Activated CD8-positive, alpha-beta T cell treated with anti-CD3 and anti-CD28 coated beads for 36 hours (primary cell): ENCODE measurements at regions of chr12 and their contacts with region 1.

Region 1: GRCh38 chr12:27014085-27014858 is at the start of gene TM7SF3:
- DNase-seq: peak; percentile 96
- ATAC-seq: peak; percentile 88
- H3K4me3 Mint-ChIP-seq: peak within 1 kb of the TSS; percentile 91
- H3K27ac Mint-ChIP-seq: peak within 1 kb of the TSS; percentile 92
- H3K4me1 Mint-ChIP-seq: peaks cover 43% of the 10 kb centered on the region
- H3K27me3 Mint-ChIP-seq: no peaks in the 10 kb centered on the region
- CTCF ChIP-seq: peak; percentile 99
- total RNA-seq, gene TM7SF3: 36.7 to 37.6 TPM

Region 2: DNA sequence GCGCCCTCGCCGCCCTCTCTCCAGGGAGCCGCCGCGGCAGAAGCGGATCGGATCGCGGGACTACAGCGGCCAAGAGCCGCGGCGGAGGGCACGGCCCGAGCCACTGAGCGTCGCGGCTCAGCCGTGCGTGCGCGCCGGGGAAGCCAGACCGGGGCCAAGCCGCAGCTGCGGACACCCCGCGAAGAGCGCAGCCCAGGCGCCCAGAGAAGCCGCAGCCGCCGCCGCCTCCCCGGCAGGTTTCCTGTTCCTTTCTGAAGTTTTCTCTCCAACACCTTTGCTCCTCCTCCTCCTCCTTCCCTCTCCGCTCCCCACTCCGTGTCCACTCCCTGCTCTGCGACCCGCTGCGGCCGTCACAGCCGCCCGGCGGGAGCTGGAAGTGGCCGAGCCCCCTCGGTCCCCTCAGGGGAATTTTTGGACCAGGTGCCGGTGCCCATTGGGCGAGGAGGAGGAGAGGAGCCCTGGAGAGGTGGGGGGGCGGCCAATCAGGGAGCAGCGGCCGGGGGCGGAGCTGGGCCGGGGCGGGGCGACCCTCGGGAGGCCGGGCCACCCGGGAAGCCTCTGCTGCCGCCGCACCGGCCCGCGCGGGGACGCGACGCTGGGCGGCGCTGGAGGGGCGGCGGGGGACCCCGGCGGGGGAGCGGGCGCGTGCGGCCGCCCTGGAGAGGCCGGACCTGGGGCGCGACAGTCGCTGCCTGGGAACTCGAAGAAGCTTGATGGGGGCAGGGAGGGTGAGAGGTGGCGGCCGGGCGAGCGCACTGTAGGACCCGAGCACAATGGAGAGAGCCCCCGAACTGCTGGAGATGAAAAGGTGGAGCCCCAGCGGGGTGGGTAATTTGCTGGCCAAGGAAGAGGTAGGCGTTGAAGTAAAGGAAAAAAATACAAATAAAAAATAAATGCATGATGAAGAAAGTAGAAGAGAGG is 181.2 kb before region 1 on chr12 and contains the start of gene ITPR2:
- CTCF ChIA-PET with region 1: interaction called, 10 read pairs
- POLR2A ChIA-PET with region 1: interaction called, 3 read pairs
- intact Hi-C with region 1: no loop called
- DNase-seq: peak; percentile 96
- ATAC-seq: peak; percentile 94
- H3K4me3 Mint-ChIP-seq: peak within 1 kb of the TSS; percentile 95
- H3K27ac Mint-ChIP-seq: peak within 1 kb of the TSS; percentile 98
- H3K4me1 Mint-ChIP-seq: peaks cover 38% of the 10 kb centered on the region
- H3K27me3 Mint-ChIP-seq: no peaks in the 10 kb centered on the region
- CTCF ChIP-seq: peak; percentile 34
- total RNA-seq, gene ITPR2: 38.9 to 41.2 TPM

Region 3: DNA sequence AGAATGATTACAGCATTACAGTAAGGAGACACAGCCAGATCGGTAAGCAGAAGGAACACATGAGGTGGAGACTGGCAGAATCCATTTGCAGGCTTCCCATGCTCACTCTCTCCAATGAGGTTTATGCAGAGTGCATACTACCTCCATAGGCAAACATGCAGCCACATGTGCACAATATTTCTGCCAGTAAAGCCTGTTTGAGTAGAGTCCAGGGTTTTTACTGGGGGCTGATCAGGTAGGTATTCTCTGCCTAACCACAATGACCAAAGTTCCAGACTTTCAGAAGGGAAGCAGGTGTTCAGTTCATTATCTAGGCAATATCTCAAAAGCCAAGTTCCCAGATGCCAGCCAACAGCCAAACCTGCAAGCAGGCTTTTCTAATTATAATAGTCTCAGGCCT is 107.6 kb before region 1 on chr12:
- CTCF ChIA-PET with region 1: no interaction called
- POLR2A ChIA-PET with region 1: no interaction called
- intact Hi-C with region 1: no loop called
- DNase-seq: no peak
- ATAC-seq: no peak
- H3K4me3 Mint-ChIP-seq: no peak overlapping the region
- H3K27ac Mint-ChIP-seq: peak overlapping the region; percentile 22
- H3K4me1 Mint-ChIP-seq: peaks cover 8% of the 10 kb centered on the region
- H3K27me3 Mint-ChIP-seq: no peaks in the 10 kb centered on the region
- CTCF ChIP-seq: no peak

Region 4: GRCh38 chr12:26937875-26938700 is 76.2 kb before region 1 on chr12 and contains the starts of genes FGFR1OP2 and INTS13:
- CTCF ChIA-PET with region 1: interaction called, 12 read pairs
- POLR2A ChIA-PET with region 1: interaction called, 5 read pairs
- intact Hi-C with region 1: loop called (anchors 2 kb)
- DNase-seq: peak; percentile 98
- ATAC-seq: peak; percentile 90
- H3K4me3 Mint-ChIP-seq: peak within 1 kb of the TSS; percentile 98
- H3K27ac Mint-ChIP-seq: peak within 1 kb of the TSS; percentile 99
- H3K4me1 Mint-ChIP-seq: peaks cover 50% of the 10 kb centered on the region
- H3K27me3 Mint-ChIP-seq: no peaks in the 10 kb centered on the region
- CTCF ChIP-seq: no peak
- total RNA-seq, gene FGFR1OP2: 72.4 to 75.1 TPM
- total RNA-seq, gene INTS13: 102 to 115 TPM

Region 5: GRCh38 chr12:27003421-27004381 is 10.6 kb before region 1 on chr12:
- CTCF ChIA-PET with region 1: interaction called, 21 read pairs
- POLR2A ChIA-PET with region 1: interaction called, 4 read pairs
- intact Hi-C with region 1: no loop called
- DNase-seq: no peak
- ATAC-seq: no peak
- H3K4me3 Mint-ChIP-seq: no peak overlapping the region
- H3K27ac Mint-ChIP-seq: no peak overlapping the region
- H3K4me1 Mint-ChIP-seq: peaks cover 22% of the 10 kb centered on the region
- H3K27me3 Mint-ChIP-seq: no peaks in the 10 kb centered on the region
- CTCF ChIP-seq: no peak

Region 6: GRCh38 chr12:27142101-27142721 is 127.9 kb after region 1 on chr12:
- CTCF ChIA-PET with region 1: interaction called, 19 read pairs
- POLR2A ChIA-PET with region 1: no interaction called
- intact Hi-C with region 1: loop called (anchors 10 kb)
- DNase-seq: peak; percentile 56
- ATAC-seq: peak; percentile 65
- H3K4me3 Mint-ChIP-seq: no peak overlapping the region
- H3K27ac Mint-ChIP-seq: no peak overlapping the region
- H3K4me1 Mint-ChIP-seq: peaks cover 7% of the 10 kb centered on the region
- H3K27me3 Mint-ChIP-seq: no peaks in the 10 kb centered on the region
- CTCF ChIP-seq: peak; percentile 95

Region 7: GRCh38 chr12:27305673-27306456 is 291.6 kb after region 1 on chr12:
- CTCF ChIA-PET with region 1: interaction called, 81 read pairs
- POLR2A ChIA-PET with region 1: no interaction called
- intact Hi-C with region 1: loop called (anchors 1 kb)
- DNase-seq: no peak
- ATAC-seq: no peak
- H3K4me3 Mint-ChIP-seq: no peak overlapping the region
- H3K27ac Mint-ChIP-seq: no peak overlapping the region
- H3K4me1 Mint-ChIP-seq: peaks cover 9% of the 10 kb centered on the region
- H3K27me3 Mint-ChIP-seq: no peaks in the 10 kb centered on the region
- CTCF ChIP-seq: peak; percentile 69